ENCODE measurements at regions of chr1 and their contacts with region 1.

Region 1: GRCh38 chr1:184222652-184223052 is 164.2 kb upstream of the C1orf21 start:
- DNase-seq: peak in 4 of 5 donors; percentile 42 to 53 (median 50)
- ATAC-seq: peak; percentile 43 to 73 (median 66)
- H3K4me3 ChIP-seq: peak overlapping the region in 10 of 12 donors; percentile 12 to 56 (median 36)
- H3K27ac ChIP-seq: peak overlapping the region in 2 of 12 donors; percentile 14 to 32
- H3K4me1 ChIP-seq: peaks cover 0 to 10% (median 1%) of the 10 kb centered on the region in 12 donors
- H3K27me3 ChIP-seq: no peaks in the 10 kb centered on the region
- CTCF ChIP-seq: peak; percentile 91 to 99 (median 96)
- POLR2A ChIP-seq: no peak

Region 2: GRCh38 chr1:184152434-184152898 is 70.2 kb before region 1 on chr1:
- intact Hi-C with region 1: loop called in 2 of 10 experiments (anchors 5 kb)
- DNase-seq: peak in 4 of 5 donors; percentile 27 to 58 (median 45)
- ATAC-seq: peak; percentile 37 to 91 (median 66)
- H3K4me3 ChIP-seq: peak overlapping the region in 11 of 12 donors; percentile 24 to 62 (median 50)
- H3K27ac ChIP-seq: peak overlapping the region; percentile 28 to 91 (median 76)
- H3K4me1 ChIP-seq: peaks cover 0 to 50% (median 22%) of the 10 kb centered on the region in 12 donors
- H3K27me3 ChIP-seq: no peaks in the 10 kb centered on the region
- CTCF ChIP-seq: no peak
- POLR2A ChIP-seq: no peak

Region 3: DNA sequence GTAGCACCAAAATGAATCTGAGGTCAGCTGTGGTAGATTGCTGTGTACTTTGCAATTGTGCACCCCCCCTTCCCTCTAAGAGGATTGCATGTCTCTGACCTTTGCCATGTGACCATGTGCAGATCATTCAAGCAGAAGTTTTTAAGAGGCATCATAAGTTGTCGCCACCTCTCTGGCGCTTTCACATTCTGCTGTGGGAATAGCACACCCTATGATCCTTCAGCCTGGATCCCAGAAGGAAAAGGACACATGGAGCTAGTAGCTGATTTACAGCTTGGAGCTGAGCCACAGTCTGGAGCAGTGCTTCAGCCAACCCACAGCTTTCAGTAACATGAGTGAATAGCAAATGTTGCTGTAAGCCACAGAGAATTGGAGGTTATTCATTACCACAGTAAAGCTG is 12.6 kb before region 1 on chr1:
- intact Hi-C with region 1: no loop called
- DNase-seq: peak in 1 of 5 donors; percentile 47
- ATAC-seq: peak in 3 of 4 donors; percentile 52 to 55 (median 53)
- H3K4me3 ChIP-seq: no peak overlapping the region
- H3K27ac ChIP-seq: no peak overlapping the region
- H3K4me1 ChIP-seq: peaks cover 0 to 20% (median 0%) of the 10 kb centered on the region in 12 donors
- H3K27me3 ChIP-seq: no peaks in the 10 kb centered on the region
- CTCF ChIP-seq: no peak
- POLR2A ChIP-seq: no peak

Region 4: GRCh38 chr1:184691719-184692324 is 469.2 kb after region 1 on chr1:
- intact Hi-C with region 1: loop called in 1 of 10 experiments (anchors 10 kb)
- DNase-seq: no peak
- ATAC-seq: peak in 2 of 4 donors; percentile 52 to 68
- H3K4me3 ChIP-seq: no peak overlapping the region
- H3K27ac ChIP-seq: no peak overlapping the region
- H3K4me1 ChIP-seq: peaks cover 0 to 3% (median 0%) of the 10 kb centered on the region in 12 donors
- H3K27me3 ChIP-seq: no peaks in the 10 kb centered on the region
- CTCF ChIP-seq: peak; percentile 55 to 87 (median 78)
- POLR2A ChIP-seq: no peak